ENCODE measurements at regions of chr3 and their contacts with region 1.

Region 1: DNA sequence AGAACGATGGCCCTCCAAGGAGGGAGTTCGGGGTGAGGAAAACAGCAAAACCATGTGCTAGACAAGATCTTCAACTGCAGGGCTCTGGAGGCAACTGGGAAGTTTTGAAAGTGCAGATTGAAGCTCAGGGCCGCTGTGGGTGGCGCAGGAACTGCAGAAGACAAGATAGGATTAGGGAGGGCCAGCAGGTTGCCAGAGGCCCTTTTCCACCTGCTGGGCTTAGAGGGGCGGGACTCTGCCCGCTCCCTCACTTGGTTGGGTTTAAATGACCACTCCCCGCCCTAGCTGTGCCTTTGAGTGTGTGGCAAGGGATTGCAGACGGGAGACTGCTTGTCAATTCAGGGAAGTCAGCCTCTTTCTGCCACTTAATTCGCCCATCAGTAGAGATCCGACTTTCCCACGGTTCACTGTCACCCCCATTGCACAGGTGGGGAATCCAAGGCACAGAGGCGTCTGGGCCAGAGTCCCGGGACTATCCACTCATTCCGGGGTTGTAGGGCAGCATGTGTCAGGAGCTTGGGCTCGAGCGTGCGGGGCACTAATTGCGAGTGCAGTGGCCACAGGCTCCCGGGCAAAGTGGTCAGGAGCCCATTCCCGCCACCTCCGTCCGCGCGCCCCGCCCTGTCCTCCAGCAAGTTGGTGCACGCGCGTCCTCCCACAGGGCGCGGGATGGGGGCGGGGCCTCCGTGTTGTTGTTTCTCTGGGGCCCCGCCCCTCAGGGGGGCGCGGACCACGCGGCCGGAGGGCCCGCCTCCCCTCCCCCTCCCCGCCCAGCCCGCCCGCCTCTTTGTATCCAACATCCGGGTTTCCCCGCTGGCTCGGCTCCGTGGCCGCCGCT is at the start of gene ACVR2B:
- DNase-seq: peak; percentile 85 to 86
- ATAC-seq: peak; percentile 43
- H3K4me3 ChIP-seq: peak within 1 kb of the TSS; percentile 73 to 92 (median 79)
- H3K27ac ChIP-seq: peak within 1 kb of the TSS; percentile 96 to 98 (median 97)
- H3K4me1 ChIP-seq: peaks cover 23 to 29% of the 10 kb centered on the region in 2 donors
- H3K27me3 ChIP-seq: no peaks in the 10 kb centered on the region
- CTCF ChIP-seq: peak in 1 of 5 experiments; percentile 14
- POLR2A ChIP-seq: peak in 1 of 2 donors; percentile 69
- total RNA-seq, gene ACVR2B: 2.4 to 12.1 (median 6.3) TPM

Region 2: GRCh38 chr3:38164966-38165680 is 288.2 kb before region 1 on chr3 and contains the start of gene OXSR1:
- in situ Hi-C with region 1: no loop called
- intact Hi-C with region 1: loop called (anchors 5 kb)
- DNase-seq: peak; percentile 98 to 99
- ATAC-seq: peak; percentile 95 to 97
- H3K4me3 ChIP-seq: peak within 1 kb of the TSS; percentile 84 to 93 (median 88)
- H3K27ac ChIP-seq: peak within 1 kb of the TSS; percentile 94 to 99 (median 96)
- H3K4me1 ChIP-seq: peaks cover 28 to 30% of the 10 kb centered on the region in 2 donors
- H3K27me3 ChIP-seq: no peaks in the 10 kb centered on the region
- CTCF ChIP-seq: peak in 1 of 5 experiments; percentile 9
- POLR2A ChIP-seq: peak; percentile 88 to 91
- total RNA-seq, gene OXSR1: 37.9 to 50.0 (median 43.2) TPM

Region 3: DNA sequence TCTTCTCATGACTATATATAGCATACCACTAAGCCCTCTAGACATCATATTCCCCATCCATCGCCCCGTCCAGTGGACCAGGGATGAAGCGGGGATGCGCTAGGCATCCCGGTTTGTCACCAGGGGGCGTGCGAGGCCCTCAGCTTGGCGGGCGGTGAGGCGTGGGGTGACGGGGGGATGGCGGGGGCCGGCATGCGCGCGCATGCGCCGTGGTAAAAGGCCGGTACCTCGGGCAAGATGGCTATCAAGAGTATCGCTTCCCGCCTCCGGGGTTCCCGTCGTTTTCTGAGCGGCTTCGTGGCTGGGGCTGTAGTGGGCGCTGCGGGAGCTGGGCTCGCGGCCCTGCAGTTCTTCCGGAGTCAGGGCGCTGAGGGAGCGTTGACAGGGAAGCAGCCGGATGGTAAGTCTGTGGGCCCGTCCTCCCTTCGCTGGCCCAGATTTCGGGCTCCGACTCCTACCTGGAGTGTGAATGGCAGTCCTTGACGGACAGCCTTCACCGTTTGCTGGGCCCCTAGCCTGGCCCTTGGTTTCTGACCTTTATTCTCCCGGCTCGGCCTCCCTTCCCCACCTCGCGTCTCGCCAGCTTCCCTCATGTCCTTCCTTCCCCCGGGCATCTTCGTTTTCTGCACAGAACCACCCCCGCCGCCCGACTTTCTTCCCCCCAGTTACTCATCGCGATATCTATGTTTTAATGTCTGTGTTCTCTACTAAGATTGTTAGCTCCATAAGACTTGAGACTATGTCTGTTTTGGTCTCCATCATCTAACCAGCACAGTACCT is 43.0 kb after region 1 on chr3 and contains the start of gene EXOG:
- in situ Hi-C with region 1: no loop called
- intact Hi-C with region 1: loop called (anchors 2 kb)
- DNase-seq: peak; percentile 88 to 89
- ATAC-seq: peak; percentile 87 to 94
- H3K4me3 ChIP-seq: peak within 1 kb of the TSS; percentile 62 to 87 (median 81)
- H3K27ac ChIP-seq: peak within 1 kb of the TSS; percentile 57 to 81 (median 72)
- H3K4me1 ChIP-seq: peaks cover 23 to 35% of the 10 kb centered on the region in 2 donors
- H3K27me3 ChIP-seq: no peaks in the 10 kb centered on the region
- CTCF ChIP-seq: peak; percentile 31 to 95 (median 71)
- POLR2A ChIP-seq: no peak
- total RNA-seq, gene EXOG: 1.6 to 6.5 (median 2.2) TPM